ENCODE measurements at regions of chr1 and their contacts with region 1.

Region 1: DNA sequence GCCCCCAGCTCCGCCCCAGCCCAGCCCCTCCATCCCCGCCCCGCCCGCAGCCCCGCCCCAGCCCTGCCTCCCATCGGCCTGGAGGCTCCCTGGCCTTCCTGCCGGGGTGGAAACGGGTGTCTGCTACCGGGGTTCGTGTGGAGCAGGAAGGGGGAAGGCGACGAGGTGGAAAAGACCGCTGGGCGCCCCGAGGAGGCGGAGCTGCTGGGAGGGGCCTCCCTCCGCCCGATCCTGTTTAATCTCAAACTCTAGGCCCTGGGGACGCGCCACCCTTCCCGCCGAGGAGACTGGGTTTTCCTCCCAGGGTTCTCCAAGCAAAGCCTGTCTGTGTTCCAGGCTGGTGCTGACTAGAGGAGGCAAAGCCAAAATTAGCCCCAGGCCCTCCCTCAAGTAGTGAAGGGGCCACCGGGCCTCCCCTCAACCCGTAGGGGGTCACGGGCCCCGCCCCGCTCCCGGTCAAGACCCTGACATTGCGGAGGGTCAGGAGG is 16.2 kb upstream of the TTLL10 start:
- DNase-seq: peak; percentile 52
- ATAC-seq: peak; percentile 66
- H3K4me3 Mint-ChIP-seq: peak overlapping the region; percentile 84
- H3K27ac Mint-ChIP-seq: peak overlapping the region; percentile 83
- H3K4me1 Mint-ChIP-seq: peaks cover 3% of the 10 kb centered on the region
- H3K27me3 Mint-ChIP-seq: no peaks in the 10 kb centered on the region
- CTCF ChIP-seq: no peak

Region 2: GRCh38 chr1:1137256-1138045 is 20.0 kb before region 1 on chr1:
- CTCF ChIA-PET with region 1: no interaction called
- POLR2A ChIA-PET with region 1: interaction called, 27 read pairs
- intact Hi-C with region 1: no loop called
- DNase-seq: peak; percentile 78
- ATAC-seq: peak; percentile 75
- H3K4me3 Mint-ChIP-seq: peak overlapping the region; percentile 76
- H3K27ac Mint-ChIP-seq: peak overlapping the region; percentile 90
- H3K4me1 Mint-ChIP-seq: peaks cover 37% of the 10 kb centered on the region
- H3K27me3 Mint-ChIP-seq: no peaks in the 10 kb centered on the region
- CTCF ChIP-seq: no peak

Region 3: GRCh38 chr1:1144122-1144842 is 13.2 kb before region 1 on chr1:
- CTCF ChIA-PET with region 1: no interaction called
- POLR2A ChIA-PET with region 1: interaction called, 9 read pairs
- intact Hi-C with region 1: loop called (anchors 1 kb)
- DNase-seq: peak; percentile 71
- ATAC-seq: peak; percentile 97
- H3K4me3 Mint-ChIP-seq: peak overlapping the region; percentile 41
- H3K27ac Mint-ChIP-seq: peak overlapping the region; percentile 93
- H3K4me1 Mint-ChIP-seq: peaks cover 33% of the 10 kb centered on the region
- H3K27me3 Mint-ChIP-seq: no peaks in the 10 kb centered on the region
- CTCF ChIP-seq: no peak

Region 4: DNA sequence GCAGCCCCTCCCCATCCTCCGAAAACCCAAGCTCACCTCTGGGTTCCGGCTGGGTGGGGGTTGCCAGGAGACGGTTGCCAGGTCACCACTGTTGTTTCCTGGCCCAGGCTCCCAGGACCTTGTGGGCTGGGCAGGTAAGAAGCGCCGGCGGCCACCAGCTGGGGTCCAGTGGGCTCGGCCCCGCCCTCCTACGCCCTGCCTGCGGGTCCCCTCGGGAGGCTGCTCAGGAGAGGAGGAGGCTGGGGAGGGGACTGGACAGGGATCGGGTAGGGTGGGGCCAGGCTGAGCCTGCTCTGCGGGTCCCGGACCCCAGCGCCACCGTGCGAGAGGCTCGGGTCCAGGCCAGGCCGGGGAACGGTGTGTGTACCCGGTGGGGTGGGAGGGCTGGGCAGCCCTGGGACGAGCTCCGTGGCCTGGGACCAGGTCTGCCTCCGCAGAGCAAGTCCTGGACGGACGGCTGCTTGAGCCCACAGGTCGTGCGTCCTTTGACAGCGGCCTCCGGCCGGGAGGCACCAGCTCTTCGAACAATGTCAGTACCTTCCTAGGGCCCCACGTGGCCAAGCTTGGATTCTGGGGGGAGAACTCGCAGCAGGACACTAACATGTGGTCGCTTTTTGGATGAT is 16.4 kb after region 1 on chr1 and contains the start of gene TTLL10:
- CTCF ChIA-PET with region 1: no interaction called
- POLR2A ChIA-PET with region 1: interaction called, 49 read pairs
- intact Hi-C with region 1: loop called (anchors 2 kb)
- DNase-seq: peak; percentile 59
- ATAC-seq: peak; percentile 21
- H3K4me3 Mint-ChIP-seq: peak within 1 kb of the TSS; percentile 28
- H3K27ac Mint-ChIP-seq: no peak within 1 kb of the TSS
- H3K4me1 Mint-ChIP-seq: peaks cover 49% of the 10 kb centered on the region
- H3K27me3 Mint-ChIP-seq: peaks cover 10% of the 10 kb centered on the region
- CTCF ChIP-seq: no peak
- total RNA-seq, gene TTLL10: 0.16 TPM in 1 of 2 replicates, not detected in the other

Region 5: DNA sequence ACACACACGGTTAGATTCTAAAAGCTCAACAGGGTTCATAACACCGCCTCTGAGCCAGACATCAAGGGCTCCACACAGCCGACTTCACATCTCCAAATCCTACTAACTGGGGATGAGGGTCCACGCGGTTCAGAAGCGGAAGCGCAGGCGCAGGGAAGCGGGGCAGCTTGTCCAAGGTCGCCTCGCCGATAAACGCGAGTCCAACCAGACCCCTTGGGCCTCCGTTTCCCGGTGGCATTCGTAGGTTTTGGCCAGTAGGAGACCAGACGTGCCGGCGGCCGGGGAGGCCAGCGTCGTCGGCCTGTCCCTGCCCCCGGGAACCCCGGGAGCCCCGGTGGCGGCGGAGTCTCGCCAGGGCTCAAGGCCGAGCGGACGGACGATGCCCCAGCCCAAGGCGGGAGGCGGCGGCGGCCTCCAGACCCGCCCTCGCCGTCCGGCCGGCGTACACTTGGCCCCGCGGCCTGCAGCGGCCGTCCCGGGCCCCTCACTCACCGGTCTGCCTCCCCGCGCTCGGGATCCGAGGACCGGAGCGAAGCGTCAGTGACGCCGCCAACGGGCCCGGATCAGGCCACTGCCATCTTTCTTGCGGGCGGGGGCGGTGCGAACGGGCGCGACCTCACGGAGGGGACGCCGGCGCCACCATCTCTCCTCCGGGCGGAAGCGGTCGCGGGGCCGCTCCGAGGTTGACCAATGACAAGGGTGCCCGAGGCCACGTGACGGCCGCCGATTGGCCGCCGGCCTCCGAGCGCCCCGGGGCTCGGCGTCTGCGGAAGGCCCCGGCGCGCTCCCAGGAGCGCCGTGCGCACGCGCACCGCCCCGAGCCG is 74.1 kb after region 1 on chr1 and contains the start of gene SDF4:
- CTCF ChIA-PET with region 1: no interaction called
- POLR2A ChIA-PET with region 1: interaction called, 12 read pairs
- intact Hi-C with region 1: no loop called
- DNase-seq: peak; percentile 91
- ATAC-seq: peak; percentile 94
- H3K4me3 Mint-ChIP-seq: peak within 1 kb of the TSS; percentile 92
- H3K27ac Mint-ChIP-seq: peak within 1 kb of the TSS; percentile 83
- H3K4me1 Mint-ChIP-seq: peaks cover 35% of the 10 kb centered on the region
- H3K27me3 Mint-ChIP-seq: no peaks in the 10 kb centered on the region
- CTCF ChIP-seq: no peak
- total RNA-seq, gene SDF4: 94.4 and 97.9 TPM in 2 replicates

Region 6: DNA sequence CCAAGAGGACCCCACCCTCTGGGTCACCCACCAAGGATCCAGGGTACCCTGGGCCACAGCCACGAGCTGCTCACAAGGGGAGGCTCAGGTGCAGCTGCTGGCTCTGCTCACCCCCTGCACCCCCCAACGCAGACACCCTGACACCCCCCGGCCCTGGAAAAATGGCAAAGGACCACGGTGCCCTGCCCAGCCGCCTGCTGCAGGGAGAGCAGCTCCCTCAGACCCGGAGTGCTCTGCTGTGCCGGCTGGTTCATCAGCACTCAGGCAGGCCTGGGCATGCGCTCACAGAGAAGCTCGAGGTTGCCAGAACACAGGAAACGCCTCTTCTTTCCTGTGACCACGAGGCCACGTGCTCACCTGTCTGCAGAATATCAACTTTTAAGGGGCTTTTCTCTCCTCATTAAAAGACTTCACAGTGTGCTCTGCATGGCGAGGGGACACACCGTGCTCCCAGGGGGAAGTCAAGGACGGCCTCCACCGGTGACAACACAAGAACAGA is 93.4 kb after region 1 on chr1:
- CTCF ChIA-PET with region 1: no interaction called
- POLR2A ChIA-PET with region 1: interaction called, 11 read pairs
- intact Hi-C with region 1: no loop called
- DNase-seq: no peak
- ATAC-seq: peak; percentile 76
- H3K4me3 Mint-ChIP-seq: peak overlapping the region; percentile 64
- H3K27ac Mint-ChIP-seq: peak overlapping the region; percentile 72
- H3K4me1 Mint-ChIP-seq: peaks cover 19% of the 10 kb centered on the region
- H3K27me3 Mint-ChIP-seq: no peaks in the 10 kb centered on the region
- CTCF ChIP-seq: no peak

Measured in activated B cell treated with CpG ODN at 0.5 μM for 24 hours (primary cell).